Mucosa of descending colon (tissue), 3 donors: ENCODE measurements at regions of chr3 and their contacts with region 1.

Region 1: DNA sequence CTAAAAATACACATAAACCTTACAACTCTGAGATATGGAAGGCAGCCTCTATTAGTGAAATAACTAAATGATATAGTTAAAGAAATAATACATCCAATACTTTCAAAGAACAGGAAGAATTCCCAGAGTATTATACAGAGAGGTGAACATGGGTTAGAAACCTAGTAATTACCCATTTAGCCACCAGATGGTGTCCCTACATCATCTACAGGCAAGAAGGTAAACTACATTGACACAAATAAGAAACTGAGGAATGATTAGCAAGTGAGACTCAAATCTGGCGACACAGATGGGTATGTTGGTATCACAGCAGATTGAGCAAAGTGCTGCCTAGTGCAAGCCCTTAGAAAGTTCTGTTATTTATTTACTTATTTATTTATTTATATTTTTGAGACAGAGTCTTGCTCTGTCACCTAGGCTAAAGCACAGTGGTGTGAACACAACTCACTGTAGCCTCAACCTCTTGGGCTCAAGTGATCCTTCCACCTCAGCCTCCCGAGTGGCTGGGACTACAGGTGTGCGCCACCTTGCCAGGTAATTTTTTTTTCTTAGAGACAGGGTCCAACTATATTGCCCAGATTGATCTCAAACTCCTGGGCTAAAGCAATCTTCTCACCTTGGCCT is 28.2 kb downstream of the NEK4 start:
- DNase-seq: peak in 1 of 3 donors; percentile 27
- ATAC-seq: peak; percentile 36
- H3K4me3 ChIP-seq: no peak overlapping the region
- H3K4me1 ChIP-seq: no peaks in the 10 kb centered on the region
- CTCF ChIP-seq: no peak

Region 2: DNA sequence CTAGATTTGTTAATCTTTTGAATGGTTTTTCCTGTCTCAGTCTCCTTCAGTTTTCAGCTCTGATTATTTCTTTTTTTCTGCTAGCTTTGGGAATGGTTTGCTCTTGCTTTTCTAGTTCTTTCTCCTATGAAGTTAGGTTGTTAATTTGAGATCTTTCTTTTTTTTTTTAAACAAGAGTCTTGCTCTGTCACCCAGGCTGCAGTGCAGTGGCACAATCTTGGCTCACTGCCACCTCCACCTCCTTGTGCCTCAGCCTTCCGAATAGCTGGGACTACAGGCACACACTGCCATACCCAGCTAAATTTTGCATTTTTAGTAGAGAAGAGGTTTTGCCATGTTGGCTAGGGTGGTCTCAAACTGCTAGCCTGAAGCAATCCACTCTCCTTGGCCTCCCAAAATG is 149.4 kb before region 1 on chr3:
- intact Hi-C with region 1: no loop called
- DNase-seq: no peak
- ATAC-seq: no peak
- H3K4me3 ChIP-seq: no peak overlapping the region
- H3K4me1 ChIP-seq: no peaks in the 10 kb centered on the region
- CTCF ChIP-seq: no peak

Region 3: GRCh38 chr3:52670621-52671521 is 71.7 kb before region 1 on chr3:
- intact Hi-C with region 1: no loop called
- DNase-seq: no peak
- ATAC-seq: peak; percentile 82
- H3K4me3 ChIP-seq: no peak overlapping the region
- H3K4me1 ChIP-seq: no peaks in the 10 kb centered on the region
- CTCF ChIP-seq: no peak

Region 4: DNA sequence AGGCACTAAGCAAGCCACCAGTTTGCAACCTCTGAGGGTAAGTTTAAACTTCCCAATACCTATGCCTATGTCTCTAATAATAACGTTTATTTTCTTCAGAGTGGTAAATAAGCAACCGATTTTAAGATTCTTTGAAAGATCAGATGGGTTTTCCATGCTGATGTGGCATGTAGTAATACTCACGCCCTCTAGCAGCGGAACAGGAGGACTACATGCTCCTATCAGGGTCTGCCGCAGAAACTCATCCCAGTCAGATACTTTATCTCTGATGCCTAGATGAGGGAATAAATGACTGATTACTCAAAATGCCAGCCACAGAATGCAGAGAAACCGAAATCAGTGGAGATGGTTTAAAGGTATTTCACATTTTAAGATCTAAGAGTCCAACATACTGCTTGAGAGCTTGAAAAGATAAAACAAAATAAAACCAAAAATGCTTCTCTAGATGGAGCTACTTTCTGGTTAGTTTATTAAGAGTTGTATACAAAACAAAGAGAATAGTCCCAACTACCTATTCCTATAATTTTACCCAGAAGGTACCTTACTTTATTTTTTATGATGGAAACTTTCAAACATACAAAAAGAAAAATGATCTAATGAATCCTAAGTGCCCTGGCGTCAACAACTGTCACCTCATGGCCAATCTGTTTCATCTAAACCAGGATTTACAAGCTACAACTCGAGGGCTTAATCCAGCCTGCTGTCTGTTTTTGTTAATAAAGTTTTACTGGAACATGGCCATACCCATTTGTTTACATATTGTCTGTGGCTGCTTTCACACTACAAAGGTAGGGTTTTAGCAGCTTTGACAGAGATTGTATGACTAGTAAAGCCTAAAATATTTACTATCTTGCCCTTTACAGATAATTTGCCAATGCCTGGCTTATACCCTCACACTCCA is 192.3 kb after region 1 on chr3:
- intact Hi-C with region 1: loop called in 1 of 2 experiments (anchors 10 kb)
- DNase-seq: peak in 1 of 3 donors; percentile 56
- ATAC-seq: peak; percentile 87
- H3K4me3 ChIP-seq: no peak overlapping the region
- H3K4me1 ChIP-seq: no peaks in the 10 kb centered on the region
- CTCF ChIP-seq: peak; percentile 65